A549 (cell line): ENCODE measurements at regions of chr15 and their contacts with region 1.

Region 1: GRCh38 chr15:52651868-52652267 is 27.3 kb downstream of the ATOSA start:
- DNase-seq: peak; percentile 77 to 94
- ATAC-seq: peak; percentile 98 to 99
- H3K4me3 ChIP-seq: peak overlapping the region; percentile 40
- H3K27ac ChIP-seq: peak overlapping the region; percentile 85 to 86
- H3K4me1 ChIP-seq: peaks cover 64% of the 10 kb centered on the region
- CTCF ChIP-seq: no peak
- EP300 ChIP-seq: no peak
- POLR2A ChIP-seq: peak; percentile 45; the same call in 1 of the 2 replicates
- RAD21 ChIP-seq: 0 out of 5 replicates have a peak, but pooled peaks of 1 of the 2 experiments have one; percentile 16

Region 2: GRCh38 chr15:52679232-52680040 is 27.6 kb after region 1 on chr15 and contains the start of gene ATOSA:
- CTCF ChIA-PET with region 1: interaction called, 6 read pairs
- POLR2A ChIA-PET with region 1: interaction called, 22 read pairs
- DNase-seq: peak; percentile 88 to 90
- ATAC-seq: peak; percentile 90 to 94
- H3K4me3 ChIP-seq: peak within 1 kb of the TSS; percentile 89
- H3K27ac ChIP-seq: peak within 1 kb of the TSS; percentile 69 to 89
- H3K4me1 ChIP-seq: peaks cover 11% of the 10 kb centered on the region; the same call in 2 of the 3 replicates
- CTCF ChIP-seq: no peak
- EP300 ChIP-seq: no peak
- POLR2A ChIP-seq: no peak
- RAD21 ChIP-seq: 0 out of 5 replicates have a peak, but pooled peaks of 1 of the 2 experiments have one; percentile 7
- polyA plus RNA-seq, gene ATOSA: 22.6 and 25.9 TPM in 2 replicates

Region 3: GRCh38 chr15:52699457-52699856 is 47.6 kb after region 1 on chr15:
- CTCF ChIA-PET with region 1: no interaction called
- POLR2A ChIA-PET with region 1: no interaction called
- DNase-seq: no peak
- ATAC-seq: no peak
- H3K4me3 ChIP-seq: no peak overlapping the region
- H3K27ac ChIP-seq: no peak overlapping the region
- H3K4me1 ChIP-seq: no peaks in the 10 kb centered on the region
- CTCF ChIP-seq: no peak
- EP300 ChIP-seq: no peak
- POLR2A ChIP-seq: no peak
- RAD21 ChIP-seq: no peak

Region 4: GRCh38 chr15:53038655-53038941 is 386.7 kb after region 1 on chr15:
- CTCF ChIA-PET with region 1: no interaction called
- POLR2A ChIA-PET with region 1: no interaction called
- DNase-seq: no peak
- ATAC-seq: peak in 1 of 2 experiments; percentile 37; a peak in 3 of 6 replicates
- H3K4me3 ChIP-seq: no peak overlapping the region
- H3K27ac ChIP-seq: no peak overlapping the region
- H3K4me1 ChIP-seq: no peaks in the 10 kb centered on the region
- CTCF ChIP-seq: no peak
- EP300 ChIP-seq: no peak
- POLR2A ChIP-seq: no peak
- RAD21 ChIP-seq: no peak